ENCODE measurements at regions of chr13 and their contacts with region 1.

Region 1: DNA sequence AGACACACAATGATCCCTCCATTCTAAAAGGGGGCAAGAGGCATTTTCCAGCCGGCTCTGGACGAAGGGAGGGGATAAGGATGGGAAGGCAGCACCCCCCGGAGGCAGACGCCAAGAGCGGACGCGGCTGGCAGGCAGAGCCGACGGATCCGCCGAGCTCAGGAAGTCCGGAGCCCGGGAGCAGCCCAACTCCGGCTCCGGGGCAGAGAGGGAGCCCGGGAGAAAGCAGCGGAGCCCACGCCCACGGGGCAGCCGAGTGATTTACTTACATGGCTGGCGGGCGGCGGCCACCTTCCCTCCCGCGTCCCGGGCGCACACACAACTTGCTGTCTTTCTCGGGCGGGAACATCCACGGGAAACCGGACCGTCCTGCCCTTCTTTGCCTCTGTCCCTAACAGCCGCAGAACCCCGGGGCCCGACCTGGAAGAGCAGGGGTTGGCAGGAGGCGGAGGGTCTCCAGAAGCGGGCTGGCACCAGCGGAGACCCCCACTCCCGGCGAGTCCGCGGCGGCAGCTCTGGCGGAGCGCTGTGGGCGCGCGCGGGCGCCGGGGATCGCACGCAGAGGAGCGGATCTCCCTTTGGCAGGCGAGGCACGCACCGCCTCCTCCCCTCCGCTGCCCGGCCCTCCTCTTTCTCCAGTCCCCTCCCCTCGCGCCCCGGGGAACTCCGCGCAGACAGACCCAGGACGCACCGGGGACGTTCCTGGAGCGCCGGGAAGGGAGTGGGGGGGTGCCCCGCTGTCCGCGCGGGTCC is at the start of gene LHFPL6:
- DNase-seq: peak; percentile 57 to 87 (median 74)
- H3K4me3 ChIP-seq: peak within 1 kb of the TSS; percentile 58 to 97 (median 84)
- H3K27ac ChIP-seq: peak within 1 kb of the TSS; percentile 35 to 92 (median 82)
- H3K27me3 ChIP-seq: no peaks in the 10 kb centered on the region
- CTCF ChIP-seq: peak in 52 of 56 donors; percentile 19 to 75 (median 50)
- total RNA-seq, gene LHFPL6: 28.1 to 66.9 (median 45.5) TPM

Region 2: DNA sequence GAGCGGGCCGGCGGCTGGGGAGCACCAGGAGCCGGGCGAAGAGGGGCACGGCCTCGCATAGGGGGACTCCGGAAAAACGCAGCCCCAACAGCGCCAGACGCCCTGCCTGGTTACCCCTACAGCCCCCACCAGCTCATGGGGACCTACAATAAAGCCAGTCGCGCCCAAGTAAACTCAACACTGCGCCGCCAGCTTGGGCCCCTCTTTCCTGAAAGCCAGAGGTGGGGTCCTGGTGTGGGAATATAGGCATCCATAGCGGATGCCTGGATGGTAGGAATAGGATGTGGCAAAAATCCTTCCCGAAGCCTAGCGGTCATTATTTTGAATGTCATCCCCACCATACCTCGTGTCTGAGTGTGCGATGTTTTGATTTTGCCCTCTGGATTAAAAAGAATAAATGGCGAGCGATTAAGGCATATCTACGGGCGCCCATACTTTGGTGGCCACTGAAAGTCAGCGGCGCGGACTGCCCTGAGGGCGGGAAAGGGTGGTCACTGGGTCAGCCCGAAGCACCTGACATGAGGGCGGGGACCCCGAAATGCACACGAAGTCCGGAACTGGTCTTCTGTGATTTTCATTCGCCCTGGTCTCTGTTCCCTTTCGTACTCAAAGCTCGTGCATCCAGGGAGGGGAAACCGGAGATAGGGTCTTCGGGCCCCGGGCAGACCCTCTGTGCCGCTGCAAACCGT is 564.8 kb before region 1 on chr13 and contains the starts of genes NHLRC3 and PROSER1:
- intact Hi-C with region 1: loop called in 1 of 2 experiments (anchors 5 kb)
- DNase-seq: peak; percentile 87 to 98 (median 96)
- H3K4me3 ChIP-seq: peak within 1 kb of the TSS; percentile 67 to 100 (median 94)
- H3K27ac ChIP-seq: peak within 1 kb of the TSS; percentile 63 to 98 (median 94)
- H3K27me3 ChIP-seq: no peaks in the 10 kb centered on the region
- CTCF ChIP-seq: peak in 32 of 56 donors; percentile 8 to 54 (median 25)
- total RNA-seq, gene NHLRC3: 18.1 to 43.9 (median 30.2) TPM
- total RNA-seq, gene PROSER1: 17.7 to 56.8 (median 32.6) TPM

Region 3: GRCh38 chr13:39415008-39415802 is 187.6 kb before region 1 on chr13:
- intact Hi-C with region 1: loop called (anchors 2 to 5 kb)
- DNase-seq: peak in 9 of 10 donors; percentile 10 to 66 (median 56)
- H3K4me3 ChIP-seq: peak overlapping the region in 38 of 59 donors; percentile 1 to 48 (median 24)
- H3K27ac ChIP-seq: peak overlapping the region; percentile 4 to 88 (median 57)
- H3K27me3 ChIP-seq: no peaks in the 10 kb centered on the region
- CTCF ChIP-seq: peak in 53 of 56 donors; percentile 16 to 79 (median 59)

Region 4: DNA sequence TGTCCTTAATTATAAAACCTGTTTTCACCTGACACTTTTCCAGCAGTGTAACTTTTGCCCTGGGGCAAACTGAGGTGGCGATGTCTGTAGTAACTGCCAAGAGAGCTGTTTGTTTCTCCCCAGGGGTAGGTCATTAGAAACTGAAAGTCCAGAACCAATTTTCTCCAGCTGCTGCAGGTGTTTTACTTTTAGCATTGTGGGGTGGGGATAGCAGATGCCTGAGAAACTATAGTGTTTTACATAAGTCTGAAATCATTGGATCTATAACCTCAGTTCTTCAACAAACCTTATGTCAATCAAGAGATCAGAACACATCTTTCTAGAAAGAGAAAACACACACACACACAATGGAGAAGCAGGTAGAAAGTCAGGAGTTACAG is 92.5 kb before region 1 on chr13:
- intact Hi-C with region 1: loop called in 1 of 2 experiments (anchors 10 kb)
- DNase-seq: no peak
- H3K4me3 ChIP-seq: no peak overlapping the region
- H3K27ac ChIP-seq: no peak overlapping the region
- H3K27me3 ChIP-seq: no peaks in the 10 kb centered on the region
- CTCF ChIP-seq: no peak